WTC11 (cell line): ENCODE measurements at regions of chr2 and their contacts with region 1.

Region 1: DNA sequence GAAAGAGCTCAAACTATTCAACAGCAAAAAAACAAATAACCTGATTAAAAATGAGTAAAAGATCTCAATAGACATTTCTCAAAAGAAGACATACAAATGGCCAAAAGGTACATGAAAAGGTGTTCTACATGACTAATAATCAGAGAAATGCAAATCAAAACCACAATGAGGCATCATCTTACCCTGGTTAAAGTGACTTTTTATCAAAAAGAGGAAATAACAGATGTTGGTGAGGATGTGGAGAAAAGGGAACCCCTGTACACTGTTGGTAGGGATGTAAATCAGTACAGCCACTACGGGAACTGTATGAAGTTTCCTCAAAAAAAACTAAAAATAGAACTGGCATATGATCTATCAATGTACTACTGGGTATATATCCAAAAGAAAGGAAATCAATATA is 39.8 kb upstream of the TMEM163 start:
- DNase-seq: no peak
- ATAC-seq: no peak
- H3K4me3 Mint-ChIP-seq: no peak overlapping the region
- H3K27ac Mint-ChIP-seq: no peak overlapping the region
- H3K4me1 Mint-ChIP-seq: no peaks in the 10 kb centered on the region
- H3K27me3 Mint-ChIP-seq: peaks cover 4% of the 10 kb centered on the region; the same call in 1 of the 2 replicates
- CTCF ChIP-seq: no peak

Region 2: DNA sequence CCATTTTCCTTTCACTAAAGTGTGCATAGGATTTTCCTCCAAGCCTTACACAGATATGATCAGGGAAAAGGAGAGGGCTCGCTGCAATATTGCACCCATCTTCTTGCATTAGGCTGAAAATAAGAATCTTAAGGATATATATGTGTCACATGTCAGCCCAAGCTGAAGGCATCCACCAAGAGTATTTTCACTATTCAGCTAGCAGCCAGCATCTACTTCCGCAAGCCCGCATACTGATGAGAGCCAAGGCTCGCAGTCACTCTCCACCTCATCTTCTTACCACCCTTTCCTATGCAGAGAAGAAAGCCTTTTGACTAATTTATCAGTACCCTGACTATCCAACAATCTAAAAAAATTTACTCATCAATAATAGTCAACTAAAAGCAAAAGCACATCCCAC is 45.9 kb before region 1 on chr2:
- CTCF ChIA-PET with region 1: no interaction called
- POLR2A ChIA-PET with region 1: interaction called, 14 read pairs
- DNase-seq: no peak
- ATAC-seq: no peak
- H3K4me3 Mint-ChIP-seq: no peak overlapping the region
- H3K27ac Mint-ChIP-seq: no peak overlapping the region
- H3K4me1 Mint-ChIP-seq: peaks cover 33% of the 10 kb centered on the region
- H3K27me3 Mint-ChIP-seq: peaks cover 34% of the 10 kb centered on the region
- CTCF ChIP-seq: no peak

Region 3: DNA sequence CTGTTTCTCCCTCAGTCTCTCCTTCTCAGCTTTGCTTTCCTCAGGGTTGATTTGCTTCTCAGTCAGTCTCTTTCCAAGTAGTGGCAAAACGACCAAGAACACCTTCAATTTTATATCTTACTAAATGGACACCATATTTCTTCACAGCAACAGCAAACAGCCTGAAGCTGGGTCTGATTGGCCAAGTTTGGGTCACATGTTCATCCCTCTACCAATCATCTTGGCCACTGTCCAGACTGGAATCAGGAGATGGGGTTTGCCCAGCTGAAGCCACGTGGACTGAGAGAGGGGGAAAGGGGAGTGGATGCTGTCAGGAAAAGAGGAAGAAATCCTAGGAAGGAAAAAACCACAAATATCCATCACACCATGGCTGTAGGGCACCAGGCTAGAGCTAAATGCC is 37.7 kb after region 1 on chr2:
- CTCF ChIA-PET with region 1: no interaction called
- POLR2A ChIA-PET with region 1: no interaction called
- DNase-seq: no peak
- ATAC-seq: no peak
- H3K4me3 Mint-ChIP-seq: no peak overlapping the region
- H3K27ac Mint-ChIP-seq: no peak overlapping the region
- H3K4me1 Mint-ChIP-seq: no peaks in the 10 kb centered on the region
- H3K27me3 Mint-ChIP-seq: no peaks in the 10 kb centered on the region; the same call in 1 of the 2 replicates
- CTCF ChIP-seq: no peak